Head of caudate nucleus (tissue), 42 donors: ENCODE measurements at regions of chr2 and their contacts with region 1.

Region 1: DNA sequence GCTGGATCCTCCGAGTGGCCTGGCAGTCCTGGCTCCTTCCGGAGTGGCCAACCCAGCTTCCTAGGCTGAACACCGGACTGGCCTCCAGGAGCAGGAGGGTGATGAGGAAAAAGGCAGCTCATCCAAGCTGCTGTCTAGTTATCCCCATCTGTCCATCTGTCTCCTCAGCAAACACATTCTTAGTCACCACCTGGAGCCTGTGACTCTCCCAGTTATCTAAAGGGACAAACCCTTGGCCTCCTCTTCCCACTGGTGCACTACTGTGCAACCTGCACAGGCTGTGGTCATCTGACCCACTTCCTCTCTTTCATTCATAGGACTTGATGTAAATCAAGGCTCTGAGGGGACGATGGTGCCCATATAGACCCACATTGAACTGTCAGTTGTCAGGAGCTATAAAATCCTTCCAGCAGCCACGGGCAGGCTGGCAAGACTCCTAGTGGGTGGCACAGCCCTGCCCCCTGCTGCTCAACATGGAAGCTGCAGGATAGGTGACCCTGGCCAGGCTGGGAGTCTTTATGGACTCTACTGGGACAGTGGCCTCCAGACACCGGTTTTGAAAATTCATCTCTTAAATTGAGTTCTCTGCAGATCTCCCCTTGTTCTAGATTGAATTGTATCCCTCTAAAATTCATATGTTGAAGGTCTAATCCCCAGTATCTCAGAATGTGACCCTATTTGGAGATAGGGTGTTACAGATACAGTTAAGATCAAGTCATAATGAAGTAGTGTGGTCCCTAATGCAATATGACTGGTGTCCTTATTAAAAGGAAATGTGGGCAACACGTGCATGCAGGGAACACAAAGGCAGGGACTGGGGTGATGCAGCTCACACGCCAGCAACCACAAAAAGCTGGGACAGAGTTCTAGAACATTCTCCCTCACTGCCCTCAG is 29.3 kb upstream of the DUSP2 start:
- DNase-seq: peak; percentile 66 to 95 (median 86)

Region 2: DNA sequence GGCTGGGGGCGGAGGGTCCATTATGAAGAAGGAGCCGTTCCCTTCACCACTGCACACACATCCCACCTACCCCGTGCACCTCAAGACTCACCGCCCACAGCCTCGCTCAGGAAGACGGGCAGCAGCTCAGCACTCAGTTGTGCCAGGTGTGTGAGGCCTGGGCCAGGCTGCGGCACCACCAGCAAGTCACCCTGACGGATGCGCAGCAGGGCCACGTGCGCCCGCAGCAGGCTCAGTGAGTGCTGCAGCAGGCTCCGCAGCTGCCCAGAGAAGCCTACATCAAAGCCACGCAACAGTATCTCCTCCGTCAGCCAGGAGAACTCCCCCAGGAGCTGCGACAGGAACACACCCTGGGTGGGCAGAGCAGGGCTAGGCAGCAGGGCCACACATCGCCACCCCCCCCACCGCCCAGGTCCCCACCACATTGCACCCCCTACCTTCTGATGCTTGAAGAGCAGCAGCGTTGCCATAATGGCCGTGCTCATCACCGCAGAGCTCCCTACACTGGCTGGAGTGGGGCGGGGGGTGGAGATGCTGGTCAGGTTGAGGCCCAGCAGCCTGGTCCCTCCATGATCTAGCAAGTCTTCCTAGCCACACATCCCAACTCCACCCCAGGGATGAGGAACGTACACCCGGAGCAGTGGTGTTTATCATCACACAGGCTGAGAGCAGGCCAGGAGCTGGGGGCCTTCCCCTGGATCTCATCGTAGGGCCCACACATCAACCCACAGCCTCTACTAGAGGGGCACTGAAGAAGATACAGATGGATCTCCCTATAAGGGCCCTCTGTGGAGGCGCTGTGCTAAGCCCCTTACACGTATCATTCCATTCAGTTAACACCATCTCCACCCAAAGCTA is 149.9 kb before region 1 on chr2:
- intact Hi-C with region 1: loop called (anchors 10 kb)
- DNase-seq: peak in 30 of 42 donors; percentile 29 to 79 (median 58)

Region 3: DNA sequence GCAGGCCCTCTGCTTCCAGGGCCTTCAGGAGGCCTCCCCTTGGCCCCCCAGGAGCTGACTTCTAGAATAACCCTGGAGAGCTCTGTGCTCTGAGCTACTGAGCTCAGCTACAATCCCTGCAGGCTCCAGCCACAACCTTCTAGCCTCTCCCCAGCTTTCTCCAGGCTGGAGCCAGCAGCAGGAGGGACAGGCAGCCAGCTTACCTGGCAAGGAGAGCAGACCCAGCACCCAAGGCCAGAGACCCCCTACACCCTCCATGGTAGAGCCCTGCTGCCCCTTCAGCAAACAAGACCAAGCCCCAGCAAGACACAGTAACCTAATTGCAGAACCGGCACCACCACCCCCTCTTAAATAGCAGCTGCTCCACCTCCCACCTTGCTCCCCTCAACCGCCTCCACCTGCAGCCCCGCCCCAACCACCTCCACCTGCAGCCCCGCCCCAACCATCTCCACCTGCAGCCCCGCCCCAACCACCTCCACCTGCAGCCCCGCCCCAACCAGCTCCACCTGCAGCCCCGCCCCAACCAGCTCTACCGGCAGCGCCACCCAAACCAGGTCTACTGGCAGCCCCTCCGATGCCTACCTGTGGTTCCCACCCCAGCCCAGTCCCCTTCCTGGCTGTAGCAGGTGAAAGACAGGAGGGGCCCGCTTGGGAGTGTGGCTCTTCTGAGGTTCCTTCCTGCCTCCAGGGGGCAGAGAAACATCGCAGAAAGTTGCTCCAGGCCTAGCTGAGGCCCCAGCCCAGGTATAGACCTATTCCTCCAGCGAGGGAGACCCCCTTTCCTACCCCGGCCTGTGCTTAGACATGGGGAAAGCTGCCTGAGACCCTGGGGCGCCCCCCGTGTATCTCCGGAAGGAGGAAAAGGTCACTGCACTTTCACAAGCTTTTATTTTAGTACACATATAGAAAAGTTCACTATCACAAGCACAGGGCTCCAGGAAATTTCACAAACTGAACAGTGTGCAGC is 36.0 kb before region 1 on chr2 and contains the start of gene ASTL:
- intact Hi-C with region 1: loop called (anchors 2 kb)
- DNase-seq: peak in 23 of 42 donors; percentile 27 to 76 (median 47)